Gastrocnemius medialis (tissue), 4 donors: ENCODE measurements at regions of chr11 and their contacts with region 1.

Region 1: GRCh38 chr11:47373876-47374720 is 4.2 kb downstream of the SPI1 start:
- DNase-seq: peak; percentile 46 to 71
- ATAC-seq: peak; percentile 78 to 87
- H3K4me3 ChIP-seq: no peak overlapping the region
- H3K27ac ChIP-seq: peak overlapping the region in 2 of 4 donors; percentile 10 to 37
- H3K4me1 ChIP-seq: peaks cover 0 to 6% of the 10 kb centered on the region in 2 donors
- H3K27me3 ChIP-seq: no peaks in the 10 kb centered on the region
- CTCF ChIP-seq: peak; percentile 90 to 97 (median 93)
- POLR2A ChIP-seq: no peak

Region 2: DNA sequence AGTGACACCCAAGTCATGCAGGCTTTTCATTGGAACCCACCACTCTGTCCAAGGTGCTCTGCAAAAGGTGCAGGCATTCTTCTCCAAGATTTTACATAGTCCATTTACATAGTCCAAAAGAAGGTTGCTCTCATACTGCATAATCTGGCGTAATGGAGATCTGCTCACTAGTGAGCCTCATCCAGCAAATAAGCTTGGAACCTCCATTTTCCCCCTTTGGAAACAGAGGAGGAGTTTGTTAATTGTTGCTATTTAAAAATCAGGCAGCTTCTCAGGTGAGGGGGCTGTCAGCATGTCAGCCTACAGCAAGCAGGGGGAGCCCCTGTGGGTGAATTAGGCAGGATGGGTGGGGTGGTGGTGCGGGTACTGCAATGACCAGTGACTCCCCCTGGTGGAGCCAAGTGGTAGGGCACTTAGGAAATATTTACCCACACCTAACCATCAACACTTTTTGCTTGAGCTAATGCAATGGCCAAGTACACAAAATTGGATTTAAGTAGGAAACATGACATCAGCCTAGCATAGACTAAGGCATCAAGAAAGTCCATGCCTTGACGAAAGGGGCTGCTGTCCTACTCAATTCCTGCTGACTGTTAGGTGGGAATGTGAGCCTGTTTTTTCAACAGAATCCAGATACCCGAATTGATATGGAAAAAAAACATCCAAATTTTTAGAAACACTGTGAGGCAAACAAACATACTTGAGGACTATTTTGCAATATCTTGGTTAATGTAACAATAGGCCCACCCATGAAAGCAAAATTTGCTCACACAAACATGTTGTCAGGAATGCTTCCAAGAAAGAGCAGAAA is 844.8 kb before region 1 on chr11:
- in situ Hi-C with region 1: no loop called
- intact Hi-C with region 1: no loop called
- DNase-seq: peak; percentile 25 to 36
- ATAC-seq: peak in 1 of 2 donors; percentile 82
- H3K4me3 ChIP-seq: no peak overlapping the region
- H3K27ac ChIP-seq: no peak overlapping the region
- H3K4me1 ChIP-seq: peaks cover 14 to 26% of the 10 kb centered on the region in 2 donors
- H3K27me3 ChIP-seq: no peaks in the 10 kb centered on the region
- CTCF ChIP-seq: peak; percentile 77 to 91 (median 88)
- POLR2A ChIP-seq: no peak

Region 3: GRCh38 chr11:47387911-47388678 is 14.0 kb after region 1 on chr11:
- in situ Hi-C with region 1: no loop called
- intact Hi-C with region 1: no loop called
- DNase-seq: no peak
- ATAC-seq: no peak
- H3K4me3 ChIP-seq: no peak overlapping the region
- H3K27ac ChIP-seq: no peak overlapping the region
- H3K4me1 ChIP-seq: peaks cover under 1 to 6% of the 10 kb centered on the region in 2 donors
- H3K27me3 ChIP-seq: no peaks in the 10 kb centered on the region
- CTCF ChIP-seq: no peak
- POLR2A ChIP-seq: no peak

Region 4: GRCh38 chr11:47399860-47400767 is 26.0 kb after region 1 on chr11:
- in situ Hi-C with region 1: loop called in 2 of 4 experiments (anchors 5 kb)
- intact Hi-C with region 1: no loop called
- DNase-seq: no peak
- ATAC-seq: no peak
- H3K4me3 ChIP-seq: peak overlapping the region; percentile 45 to 57 (median 52)
- H3K27ac ChIP-seq: peak overlapping the region; percentile 58 to 68 (median 62)
- H3K4me1 ChIP-seq: peaks cover 0 to 2% of the 10 kb centered on the region in 2 donors
- H3K27me3 ChIP-seq: no peaks in the 10 kb centered on the region
- CTCF ChIP-seq: no peak
- POLR2A ChIP-seq: peak in 1 of 2 donors; percentile 36